ENCODE measurements at regions of chr22 and their contacts with region 1.

Region 1: GRCh38 chr22:25582946-25583345 is 18.5 kb downstream of the GRK3 start:
- DNase-seq: no peak
- H3K4me3 ChIP-seq: no peak overlapping the region
- H3K27ac ChIP-seq: no peak overlapping the region
- H3K27me3 ChIP-seq: no peaks in the 10 kb centered on the region
- CTCF ChIP-seq: no peak

Region 2: DNA sequence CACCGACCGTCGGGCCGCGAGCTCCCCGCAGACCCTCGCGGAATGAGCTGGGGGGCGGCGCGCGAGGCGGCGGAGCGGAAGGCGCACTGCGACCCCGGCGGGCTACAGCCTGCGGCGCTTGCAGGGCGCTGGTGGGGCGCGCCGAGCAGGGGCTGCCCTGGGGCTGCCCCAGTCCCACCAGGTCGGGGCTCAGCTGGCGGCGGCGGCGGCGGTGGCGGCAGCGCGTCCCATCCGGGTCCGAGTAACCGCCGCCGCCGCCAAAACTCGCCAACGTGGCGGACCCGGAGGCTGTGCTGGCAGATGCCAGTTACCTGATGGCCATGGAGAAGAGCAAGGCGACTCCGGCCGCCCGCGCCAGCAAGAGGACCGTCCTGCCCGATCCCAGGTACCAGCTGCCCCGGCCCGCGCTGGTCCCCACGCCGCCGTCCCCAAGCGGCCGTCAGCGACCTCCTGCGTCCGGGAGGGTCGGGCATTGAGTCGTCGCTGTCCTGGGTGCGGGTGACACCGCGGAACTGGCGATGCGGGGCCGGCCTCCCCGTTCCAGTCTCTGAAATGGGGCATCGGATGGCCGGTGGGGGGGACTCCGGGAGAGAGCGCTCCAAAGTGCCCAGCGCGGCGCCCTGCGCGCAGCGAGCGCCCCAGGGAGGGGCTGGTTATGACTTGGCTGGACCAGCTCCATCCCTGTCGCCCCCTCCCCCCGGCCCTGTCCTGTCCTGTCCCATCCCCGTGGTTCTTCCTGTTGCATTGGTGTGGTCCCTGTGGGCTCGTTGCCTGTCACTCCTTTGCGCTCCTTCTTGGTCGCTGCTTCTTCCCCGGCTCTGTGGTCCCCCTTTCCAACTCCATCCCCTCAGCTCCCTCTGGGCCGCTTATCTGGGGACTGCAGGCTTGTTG is 300.0 kb before region 1 on chr22:
- intact Hi-C with region 1: loop called in 1 of 2 experiments (anchors 10 kb)
- DNase-seq: no peak
- H3K4me3 ChIP-seq: peak overlapping the region in 29 of 59 donors; percentile 7 to 51 (median 32)
- H3K27ac ChIP-seq: no peak overlapping the region
- H3K27me3 ChIP-seq: peaks cover 0 to 69% (median 45%) of the 10 kb centered on the region in 45 donors
- CTCF ChIP-seq: no peak

Region 3: GRCh38 chr22:25554238-25554671 is 28.7 kb before region 1 on chr22:
- intact Hi-C with region 1: no loop called
- DNase-seq: no peak
- H3K4me3 ChIP-seq: no peak overlapping the region
- H3K27ac ChIP-seq: no peak overlapping the region
- H3K27me3 ChIP-seq: no peaks in the 10 kb centered on the region
- CTCF ChIP-seq: no peak